Activated T-helper 2 cell treated with anti-CD3 and anti-CD28 coated beads, Interferon-gamma antibody, Interleukin-2, Interleukin-4, amounts not matched to agents 10 μg/mL and 5 μg/mL and 100 μg/mL, durations not matched to agents 14 hours and 24 hours and 36 hours (primary cell): ENCODE measurements at regions of chr1 and their contacts with region 1.

Region 1: GRCh38 chr1:211698161-211699026 is 23.0 kb upstream of the NEK2 start:
- DNase-seq: peak; percentile 74
- H3K4me3 Mint-ChIP-seq: no peak overlapping the region
- H3K27ac Mint-ChIP-seq: no peak overlapping the region
- H3K4me1 Mint-ChIP-seq: peaks cover 12% of the 10 kb centered on the region
- H3K27me3 Mint-ChIP-seq: peaks cover 26% of the 10 kb centered on the region

Region 2: DNA sequence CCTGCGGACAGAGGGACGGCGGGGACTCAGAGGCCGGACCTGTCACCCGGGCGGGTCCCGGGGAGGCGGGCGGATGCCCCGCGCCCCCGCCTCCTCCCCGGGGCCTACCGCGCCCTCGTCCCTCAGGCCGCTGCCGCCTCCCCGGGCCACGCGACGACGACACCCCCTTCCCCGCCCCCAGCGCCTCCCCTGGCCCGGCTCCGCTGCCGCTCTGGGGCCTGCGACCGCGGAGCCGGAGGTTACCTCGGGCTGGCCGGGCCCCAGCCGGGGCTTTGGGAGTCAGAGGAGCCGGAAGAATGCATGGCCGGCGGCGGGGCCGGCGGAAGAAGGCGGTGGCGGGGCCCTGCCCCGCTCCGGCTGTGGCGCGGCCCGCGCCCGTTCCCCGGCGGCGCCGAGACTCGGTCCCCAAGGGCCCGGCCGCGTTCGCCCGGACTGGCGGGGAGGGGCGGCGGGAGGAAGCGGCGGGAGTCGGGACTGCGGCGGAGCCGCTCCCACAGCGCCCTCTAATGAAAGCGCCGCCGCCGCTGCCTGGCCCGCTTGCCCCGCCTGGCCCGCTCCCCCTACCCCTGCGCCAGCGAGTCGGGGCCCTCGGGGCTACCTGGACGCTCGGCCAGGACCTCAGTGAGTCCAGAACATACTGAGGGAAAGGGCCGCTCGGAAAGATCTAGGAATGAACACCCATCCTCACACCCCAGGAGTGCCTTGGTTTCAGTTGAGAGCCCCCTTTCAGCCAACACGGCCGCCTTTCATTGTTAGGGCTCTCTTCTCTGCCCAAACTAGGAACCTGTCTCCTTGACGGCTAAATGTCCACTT is 132.1 kb after region 1 on chr1 and contains the start of gene LPGAT1:
- intact Hi-C with region 1: loop called (anchors 1 kb)
- DNase-seq: peak; percentile 67
- H3K4me3 Mint-ChIP-seq: peak within 1 kb of the TSS; percentile 92
- H3K27ac Mint-ChIP-seq: peak within 1 kb of the TSS; percentile 78
- H3K4me1 Mint-ChIP-seq: peaks cover 55% of the 10 kb centered on the region
- H3K27me3 Mint-ChIP-seq: peaks cover 6% of the 10 kb centered on the region
- total RNA-seq, gene LPGAT1: 27.8 and 31.1 TPM in 2 replicates

Region 3: GRCh38 chr1:211935448-211935970 is 237.1 kb after region 1 on chr1:
- intact Hi-C with region 1: loop called (anchors 5 kb)
- DNase-seq: no peak
- H3K4me3 Mint-ChIP-seq: peak overlapping the region; percentile 3
- H3K27ac Mint-ChIP-seq: peak overlapping the region; percentile 6
- H3K4me1 Mint-ChIP-seq: peaks cover 43% of the 10 kb centered on the region
- H3K27me3 Mint-ChIP-seq: peaks cover 2% of the 10 kb centered on the region